H1 (cell line): ENCODE measurements at regions of chr9 and their contacts with region 1.

Region 1: GRCh38 chr9:137665697-137666510 is 47.1 kb downstream of the EHMT1 start:
- DNase-seq: no peak
- H3K4me3 ChIP-seq: peak overlapping the region in 2 of 4 experiments; percentile 10 to 41; a peak in 3 of 8 replicates
- H3K27ac ChIP-seq: peak overlapping the region; percentile 87
- H3K4me1 ChIP-seq: peaks cover 26 to 61% (median 45%) of the 10 kb centered on the region in 4 experiments
- H3K27me3 ChIP-seq: no peaks in the 10 kb centered on the region
- CTCF ChIP-seq: peak in 2 of 3 experiments; percentile 16 to 23; a peak in 2 of 4 replicates
- EP300 ChIP-seq: no peak
- POLR2A ChIP-seq: no peak
- RAD21 ChIP-seq: no peak

Region 2: GRCh38 chr9:137647096-137647714 is 18.7 kb before region 1 on chr9:
- CTCF ChIA-PET with region 1: interaction called, 11 read pairs
- POLR2A ChIA-PET with region 1: interaction called, 6 read pairs
- DNase-seq: no peak
- H3K4me3 ChIP-seq: no peak overlapping the region
- H3K27ac ChIP-seq: no peak overlapping the region; the same call in 1 of the 2 replicates
- H3K4me1 ChIP-seq: peaks cover 0 to 3% (median 0%) of the 10 kb centered on the region in 4 experiments; a peak in 1 of 7 replicates
- H3K27me3 ChIP-seq: no peaks in the 10 kb centered on the region
- CTCF ChIP-seq: no peak
- EP300 ChIP-seq: no peak
- POLR2A ChIP-seq: no peak
- RAD21 ChIP-seq: no peak

Region 3: GRCh38 chr9:137682431-137682991 is 16.6 kb after region 1 on chr9:
- CTCF ChIA-PET with region 1: interaction called, 8 read pairs
- POLR2A ChIA-PET with region 1: interaction called, 26 read pairs
- DNase-seq: no peak
- H3K4me3 ChIP-seq: no peak overlapping the region
- H3K27ac ChIP-seq: no peak overlapping the region
- H3K4me1 ChIP-seq: peaks cover 18 to 41% (median 32%) of the 10 kb centered on the region in 4 experiments
- H3K27me3 ChIP-seq: no peaks in the 10 kb centered on the region
- CTCF ChIP-seq: peak in 1 of 3 experiments; percentile 41; a peak in 1 of 4 replicates
- EP300 ChIP-seq: no peak
- POLR2A ChIP-seq: no peak
- RAD21 ChIP-seq: peak; percentile 16 to 35; a peak in 2 of 4 replicates